Calu3 (cell line): ENCODE measurements at regions of chr7 and their contacts with region 1.

Region 1: GRCh38 chr7:22103255-22103969 is 157.7 kb upstream of the CDCA7L start:
- DNase-seq: peak; percentile 84
- H3K4me3 Mint-ChIP-seq: peak overlapping the region; percentile 31
- H3K27ac Mint-ChIP-seq: no peak overlapping the region
- H3K4me1 Mint-ChIP-seq: peaks cover 13% of the 10 kb centered on the region
- H3K27me3 Mint-ChIP-seq: peaks cover 30% of the 10 kb centered on the region
- CTCF ChIP-seq: peak; percentile 83

Region 2: DNA sequence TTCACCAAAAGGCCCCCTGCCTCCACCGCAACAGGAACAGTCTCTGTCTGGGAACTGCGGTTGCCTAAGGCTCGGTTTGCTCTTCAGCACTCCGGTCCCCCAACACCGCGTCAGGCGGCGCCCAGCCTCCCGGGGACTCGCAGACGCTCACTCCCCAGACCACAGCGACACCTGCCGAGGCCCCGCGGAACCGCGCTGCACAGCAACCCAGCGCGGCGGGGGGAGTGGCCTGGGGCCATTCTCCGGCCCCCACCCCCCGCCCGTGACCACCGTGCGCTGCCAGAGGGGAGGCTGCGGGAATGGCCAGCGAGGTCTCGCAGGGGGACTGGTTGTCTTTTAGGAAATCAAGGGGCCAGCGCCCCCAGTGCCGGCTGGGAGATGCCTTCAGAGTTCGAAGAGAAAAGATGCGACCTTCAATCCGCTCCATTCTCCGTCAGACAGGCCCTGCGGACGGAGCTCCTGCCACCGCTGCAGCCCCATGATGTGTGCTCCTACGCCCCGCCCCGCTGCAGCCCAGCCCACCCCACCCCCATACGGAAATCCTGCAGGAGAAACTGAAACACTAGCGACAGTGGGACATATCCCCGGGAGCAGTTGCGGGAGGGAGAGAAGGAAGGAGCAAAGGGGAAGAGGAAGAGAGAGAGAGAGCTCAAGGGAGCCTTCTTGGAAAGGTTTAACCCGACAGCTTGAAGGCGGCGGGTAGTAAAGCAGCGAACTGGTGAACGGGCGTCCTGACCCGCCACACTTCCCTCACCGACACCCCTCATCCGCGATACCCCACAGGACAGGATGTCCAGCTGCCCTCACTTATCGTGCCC is 20.3 kb before region 1 on chr7:
- CTCF ChIA-PET with region 1: interaction called, 11 read pairs
- intact Hi-C with region 1: no loop called
- DNase-seq: peak; percentile 99
- H3K4me3 Mint-ChIP-seq: peak overlapping the region; percentile 89
- H3K27ac Mint-ChIP-seq: peak overlapping the region; percentile 95
- H3K4me1 Mint-ChIP-seq: peaks cover 18% of the 10 kb centered on the region
- H3K27me3 Mint-ChIP-seq: peaks cover 40% of the 10 kb centered on the region
- CTCF ChIP-seq: peak; percentile 99

Region 3: DNA sequence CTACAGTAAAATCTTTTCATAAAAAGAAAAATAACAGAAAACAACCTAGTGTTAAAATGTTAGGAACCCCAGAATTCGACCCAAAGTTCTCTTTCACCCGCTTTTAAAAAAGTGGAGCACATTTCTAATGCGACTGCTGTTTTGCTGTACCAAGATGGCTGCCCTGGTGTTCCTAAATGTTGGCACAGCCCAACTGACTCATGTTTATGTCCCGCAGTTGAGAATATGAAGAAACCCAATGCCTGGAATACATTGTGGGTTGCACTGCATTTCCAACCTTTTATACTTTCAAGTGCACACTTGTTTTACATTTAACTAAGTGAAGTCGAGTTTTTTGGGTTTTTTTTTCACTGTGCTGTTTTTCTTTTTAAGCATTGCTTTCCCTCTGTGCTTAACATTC is 395.6 kb after region 1 on chr7:
- CTCF ChIA-PET with region 1: no interaction called
- intact Hi-C with region 1: loop called (anchors 2 kb)
- DNase-seq: no peak
- H3K4me3 Mint-ChIP-seq: peak overlapping the region; percentile 71
- H3K27ac Mint-ChIP-seq: no peak overlapping the region
- H3K4me1 Mint-ChIP-seq: peaks cover 22% of the 10 kb centered on the region
- H3K27me3 Mint-ChIP-seq: peaks cover 13% of the 10 kb centered on the region
- CTCF ChIP-seq: no peak